Activated naive CD4-positive, alpha-beta T cell treated with anti-CD3 and anti-CD28 coated beads for 36 hours (primary cell): ENCODE measurements at regions of chr7 and their contacts with region 1.

Region 1: DNA sequence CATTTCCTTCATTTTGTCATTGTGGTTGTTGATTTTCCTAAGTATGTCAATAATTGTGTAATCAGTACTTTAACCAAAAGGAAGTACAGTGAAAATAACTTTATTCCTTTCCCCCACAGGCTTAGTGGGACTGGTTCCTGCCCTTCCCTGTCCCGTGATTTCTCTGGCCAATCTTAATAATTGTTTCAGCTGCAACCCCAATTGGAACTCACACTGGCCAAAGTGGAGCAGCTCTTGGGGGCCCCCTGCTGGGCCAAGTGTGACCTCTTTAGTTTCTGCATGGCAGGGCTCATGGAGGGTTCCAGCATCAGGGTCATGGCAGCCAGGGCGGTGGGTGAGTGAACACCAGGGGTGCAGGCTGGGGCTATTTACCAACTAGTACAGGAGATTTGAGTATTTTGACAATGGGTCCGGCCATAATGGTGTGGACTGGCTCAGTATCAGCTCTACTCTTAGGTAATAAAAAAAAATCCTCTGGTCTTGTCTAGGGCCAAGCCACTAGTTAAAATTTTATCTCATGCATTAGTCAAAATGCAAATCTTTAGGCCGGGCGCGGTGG is 31.7 kb downstream of the CYCS start:
- DNase-seq: peak; percentile 90
- H3K4me3 Mint-ChIP-seq: no peak overlapping the region
- H3K27ac Mint-ChIP-seq: no peak overlapping the region
- H3K4me1 Mint-ChIP-seq: peaks cover 8% of the 10 kb centered on the region
- H3K27me3 Mint-ChIP-seq: peaks cover 2% of the 10 kb centered on the region

Region 2: DNA sequence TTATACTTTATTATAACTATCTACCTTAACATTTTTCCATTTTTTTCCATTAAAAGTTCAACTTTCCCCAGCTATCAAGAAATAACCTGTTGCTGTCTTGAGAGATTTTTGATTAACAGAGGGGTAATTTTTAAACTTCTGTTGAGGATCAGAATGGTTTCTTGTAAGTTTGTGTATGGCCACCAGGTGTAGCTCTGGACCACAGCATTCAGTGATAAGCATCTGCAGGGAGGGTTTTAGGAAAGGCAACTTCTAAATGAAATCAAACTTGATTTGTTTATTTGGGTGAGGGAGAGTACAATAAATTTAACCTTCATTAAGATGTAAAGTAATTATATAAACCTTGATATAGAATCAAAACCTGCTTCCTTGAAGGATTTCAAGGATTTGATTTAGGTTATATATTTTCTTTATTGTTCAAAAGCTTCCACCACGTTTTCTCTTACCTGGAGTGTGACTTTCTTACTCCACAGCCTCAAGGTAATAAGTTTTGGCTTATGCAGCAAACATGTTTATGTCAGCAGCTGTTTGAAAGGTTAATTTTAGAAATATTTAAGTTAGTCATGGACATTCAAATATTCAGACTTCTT is 1230.0 kb before region 1 on chr7:
- CTCF ChIA-PET with region 1: interaction called, 3 read pairs
- intact Hi-C with region 1: loop called (anchors 5 kb)
- DNase-seq: peak; percentile 46
- H3K4me3 Mint-ChIP-seq: no peak overlapping the region
- H3K27ac Mint-ChIP-seq: no peak overlapping the region
- H3K4me1 Mint-ChIP-seq: no peaks in the 10 kb centered on the region
- H3K27me3 Mint-ChIP-seq: peaks cover 8% of the 10 kb centered on the region

Region 3: DNA sequence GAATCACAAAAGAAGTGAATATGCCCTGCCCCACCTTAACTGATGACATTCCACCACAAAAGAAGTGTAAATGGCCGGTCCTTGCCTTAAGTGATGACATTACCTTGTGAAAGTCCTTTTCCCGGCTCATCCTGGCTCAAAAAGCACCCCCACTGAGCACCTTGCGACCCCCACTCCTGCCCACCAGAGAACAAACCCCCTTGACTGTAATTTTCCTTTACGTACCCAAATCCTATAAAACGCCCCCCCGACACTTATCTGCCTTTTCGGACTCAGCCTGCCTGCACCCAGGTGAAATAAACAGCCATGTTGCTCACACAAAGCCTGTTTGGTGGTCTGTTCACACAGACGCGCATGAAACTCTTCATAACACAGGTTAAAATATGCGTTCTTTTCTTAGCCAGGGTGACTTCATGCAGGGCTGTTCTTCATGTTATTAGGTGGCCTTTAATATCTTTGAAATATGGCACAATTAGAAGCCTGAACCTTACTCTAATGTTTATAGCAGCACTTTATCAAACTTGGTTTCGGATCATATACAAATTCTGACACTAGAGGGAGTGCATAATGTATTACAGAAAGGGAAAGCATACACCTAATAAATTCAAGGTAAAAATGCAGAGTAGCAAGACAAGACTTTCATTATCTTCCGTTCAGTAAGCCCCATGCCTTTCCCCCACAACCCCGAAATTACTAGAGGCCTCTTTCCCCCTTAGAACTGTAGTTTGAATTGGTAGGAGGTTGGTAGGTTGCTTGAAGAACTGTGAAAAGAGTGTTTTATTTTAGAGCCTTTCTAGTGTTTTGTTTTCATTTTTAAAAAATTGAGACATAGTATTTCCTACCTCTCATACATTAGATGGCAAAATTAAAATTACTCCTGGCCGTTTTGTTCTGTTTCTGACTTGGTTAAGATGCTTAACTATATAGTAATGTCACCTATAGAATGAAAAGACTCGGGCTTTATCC is 691.4 kb before region 1 on chr7:
- CTCF ChIA-PET with region 1: interaction called, 4 read pairs
- intact Hi-C with region 1: loop called (anchors 2 kb)
- DNase-seq: no peak
- H3K4me3 Mint-ChIP-seq: no peak overlapping the region
- H3K27ac Mint-ChIP-seq: no peak overlapping the region
- H3K4me1 Mint-ChIP-seq: peaks cover 7% of the 10 kb centered on the region
- H3K27me3 Mint-ChIP-seq: no peaks in the 10 kb centered on the region

Region 4: GRCh38 chr7:24757353-24758275 is 335.7 kb before region 1 on chr7 and contains the start of gene GSDME:
- CTCF ChIA-PET with region 1: interaction called, 3 read pairs
- intact Hi-C with region 1: loop called (anchors 1 kb)
- DNase-seq: no peak
- H3K4me3 Mint-ChIP-seq: peak within 1 kb of the TSS; percentile 85
- H3K27ac Mint-ChIP-seq: peak within 1 kb of the TSS; percentile 88
- H3K4me1 Mint-ChIP-seq: peaks cover 33% of the 10 kb centered on the region
- H3K27me3 Mint-ChIP-seq: peaks cover 39% of the 10 kb centered on the region
- total RNA-seq, gene GSDME: 6.8 to 6.9 TPM

Region 5: DNA sequence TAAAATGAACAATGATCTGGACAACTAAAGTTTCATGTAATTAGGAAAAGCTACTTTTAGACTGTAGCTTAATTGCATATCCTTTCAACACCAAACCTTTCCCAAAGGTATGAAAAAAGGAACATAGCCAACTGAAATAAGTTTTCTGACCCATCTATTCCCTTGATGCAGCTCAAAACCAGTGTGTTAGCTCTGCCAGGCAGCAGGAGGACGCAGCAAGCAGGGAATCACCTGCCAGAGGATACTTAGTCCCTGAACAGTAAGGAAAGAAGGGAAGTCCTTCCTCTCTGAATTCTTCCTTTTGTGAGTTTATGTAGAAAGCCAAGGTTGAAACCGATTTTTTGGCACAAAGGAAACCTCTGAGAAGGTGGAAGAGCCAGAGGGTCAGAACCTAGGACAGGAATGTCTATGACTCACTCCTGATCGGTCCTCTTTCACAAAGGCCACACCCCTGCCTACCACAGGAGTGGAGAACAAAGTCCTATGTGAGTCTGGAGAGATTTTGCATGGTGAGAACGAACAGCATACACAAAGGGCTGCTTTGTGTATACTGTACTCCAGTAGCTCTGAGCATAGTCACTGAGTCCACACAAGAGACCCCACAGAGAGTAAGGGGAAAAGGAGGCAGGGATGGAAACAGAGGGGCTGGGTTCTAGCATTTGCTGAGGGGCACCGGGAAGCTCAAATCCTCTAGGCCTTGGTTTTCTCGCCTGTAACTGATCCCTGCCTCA is 267.3 kb before region 1 on chr7:
- CTCF ChIA-PET with region 1: interaction called, 20 read pairs
- intact Hi-C with region 1: loop called (anchors 1 kb)
- DNase-seq: no peak
- H3K4me3 Mint-ChIP-seq: no peak overlapping the region
- H3K27ac Mint-ChIP-seq: no peak overlapping the region
- H3K4me1 Mint-ChIP-seq: peaks cover 40% of the 10 kb centered on the region
- H3K27me3 Mint-ChIP-seq: no peaks in the 10 kb centered on the region

Region 6: DNA sequence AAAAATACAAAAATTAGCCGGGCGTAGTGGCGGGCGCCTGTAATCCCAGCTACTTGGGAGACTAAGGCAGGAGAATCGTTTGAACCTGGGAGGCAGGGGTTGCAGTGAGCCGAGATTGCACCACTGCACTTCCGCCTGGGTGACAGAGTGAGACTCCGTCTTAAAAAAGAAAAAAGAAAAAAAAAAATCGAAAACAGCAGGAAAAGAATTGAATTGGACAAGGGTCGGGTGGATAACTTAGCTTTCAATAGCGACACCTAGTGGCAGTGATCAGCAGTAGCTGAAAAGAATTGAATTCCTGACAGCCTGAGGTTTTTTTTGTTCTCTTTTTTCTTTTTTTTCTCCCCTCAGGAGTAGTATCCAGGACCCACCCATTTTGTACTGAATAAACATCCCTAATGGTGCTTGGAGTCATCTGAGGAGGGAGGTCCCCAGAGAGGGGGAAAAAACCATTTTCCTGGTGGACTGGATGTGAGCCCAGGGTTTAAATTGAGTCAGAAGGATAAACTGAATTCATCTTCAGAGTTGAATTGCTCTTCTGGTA is 23.4 kb before region 1 on chr7:
- CTCF ChIA-PET with region 1: interaction called, 77 read pairs
- intact Hi-C with region 1: loop called (anchors 1 kb)
- DNase-seq: peak; percentile 57
- H3K4me3 Mint-ChIP-seq: no peak overlapping the region
- H3K27ac Mint-ChIP-seq: no peak overlapping the region
- H3K4me1 Mint-ChIP-seq: peaks cover 6% of the 10 kb centered on the region
- H3K27me3 Mint-ChIP-seq: no peaks in the 10 kb centered on the region

Region 7: GRCh38 chr7:25216837-25217236 is 123.5 kb after region 1 on chr7:
- CTCF ChIA-PET with region 1: no interaction called
- intact Hi-C with region 1: no loop called
- DNase-seq: no peak
- H3K4me3 Mint-ChIP-seq: no peak overlapping the region
- H3K27ac Mint-ChIP-seq: no peak overlapping the region
- H3K4me1 Mint-ChIP-seq: no peaks in the 10 kb centered on the region
- H3K27me3 Mint-ChIP-seq: peaks cover 14% of the 10 kb centered on the region

Region 8: DNA sequence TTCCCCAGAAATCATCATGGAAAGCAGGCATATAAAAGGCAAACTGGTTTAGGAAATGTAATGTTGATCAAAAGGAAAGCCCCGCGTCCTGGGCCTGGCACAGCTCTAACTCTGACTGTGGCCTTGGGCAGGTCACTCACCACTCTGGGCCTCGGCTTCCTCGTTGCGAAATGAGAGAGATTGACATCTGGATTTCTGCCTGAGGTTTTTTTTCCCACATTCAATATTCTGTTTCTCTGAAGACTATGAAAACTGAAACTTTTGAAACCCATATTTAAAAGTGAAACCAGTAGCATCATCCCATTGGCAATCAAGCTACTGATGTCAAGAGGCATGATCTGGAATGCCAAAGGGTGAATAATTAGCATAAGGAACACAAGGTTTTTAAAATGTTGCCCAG is 504.6 kb after region 1 on chr7:
- CTCF ChIA-PET with region 1: no interaction called
- intact Hi-C with region 1: no loop called
- DNase-seq: peak; percentile 11
- H3K4me3 Mint-ChIP-seq: no peak overlapping the region
- H3K27ac Mint-ChIP-seq: no peak overlapping the region
- H3K4me1 Mint-ChIP-seq: peaks cover 4% of the 10 kb centered on the region
- H3K27me3 Mint-ChIP-seq: no peaks in the 10 kb centered on the region